ENCODE measurements at regions of chr16 and their contacts with region 1.

Region 1: DNA sequence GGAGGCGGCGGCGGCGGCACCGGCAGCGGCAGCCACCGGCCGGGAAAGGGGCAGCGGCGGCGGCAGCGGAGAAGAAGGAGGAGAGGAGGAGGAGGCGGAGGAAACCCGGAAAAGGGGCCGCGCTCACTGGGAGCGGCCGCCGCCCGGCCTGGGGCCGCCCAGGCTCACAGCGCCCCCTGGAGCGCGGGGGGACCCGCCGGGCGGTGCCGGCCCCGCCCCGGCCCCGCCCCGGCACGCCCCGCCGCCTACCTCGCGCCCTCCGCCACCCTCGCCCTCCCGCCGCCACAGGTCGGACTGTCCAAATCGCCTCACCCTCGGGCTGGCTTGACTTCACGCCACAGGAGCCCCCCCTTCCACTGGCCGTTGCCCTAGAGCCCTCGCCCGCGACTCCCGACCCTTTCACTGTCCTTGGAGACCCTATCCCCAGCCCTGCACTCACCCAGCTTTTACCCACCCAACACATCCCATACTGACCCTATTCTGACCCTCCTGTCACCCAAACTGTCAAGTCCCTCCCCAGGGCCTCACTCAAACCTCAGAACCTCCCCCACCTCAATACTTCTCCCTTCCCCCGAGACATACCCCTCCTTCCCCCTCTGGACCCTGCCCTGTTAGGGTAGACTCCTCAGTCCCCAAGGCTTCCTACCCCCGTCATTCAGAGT is at the start of gene CSNK2A2:
- DNase-seq: peak; percentile 56
- ATAC-seq: peak; percentile 99
- H3K4me3 ChIP-seq: peak within 1 kb of the TSS; percentile 82
- H3K27ac ChIP-seq: peak within 1 kb of the TSS; percentile 48
- H3K4me1 ChIP-seq: peaks cover 4% of the 10 kb centered on the region
- H3K27me3 ChIP-seq: peaks cover 15% of the 10 kb centered on the region
- CTCF ChIP-seq: peak; percentile 64
- POLR2A ChIP-seq: 0 out of 2 replicates have a peak, but pooled peaks have one; percentile 23
- RAD21 ChIP-seq: peak; percentile 11; the same call in 1 of the 2 replicates
- total RNA-seq, gene CSNK2A2: 15.6 and 16.9 TPM in 2 replicates

Region 2: GRCh38 chr16:58187092-58187491 is 11.1 kb before region 1 on chr16:
- CTCF ChIA-PET with region 1: no interaction called
- POLR2A ChIA-PET with region 1: no interaction called
- dilution Hi-C with region 1: no loop called
- in situ Hi-C with region 1: no loop called
- intact Hi-C with region 1: no loop called
- DNase-seq: no peak
- ATAC-seq: no peak
- H3K4me3 ChIP-seq: no peak overlapping the region
- H3K27ac ChIP-seq: no peak overlapping the region
- H3K4me1 ChIP-seq: no peaks in the 10 kb centered on the region
- H3K27me3 ChIP-seq: no peaks in the 10 kb centered on the region
- CTCF ChIP-seq: no peak
- POLR2A ChIP-seq: no peak
- RAD21 ChIP-seq: no peak

Region 3: GRCh38 chr16:58306327-58306726 is 108.2 kb after region 1 on chr16:
- CTCF ChIA-PET with region 1: no interaction called
- POLR2A ChIA-PET with region 1: no interaction called
- dilution Hi-C with region 1: no loop called
- in situ Hi-C with region 1: no loop called
- intact Hi-C with region 1: loop called (anchors 1 kb)
- DNase-seq: peak; percentile 24
- ATAC-seq: no peak
- H3K4me3 ChIP-seq: no peak overlapping the region
- H3K27ac ChIP-seq: no peak overlapping the region
- H3K4me1 ChIP-seq: no peaks in the 10 kb centered on the region
- H3K27me3 ChIP-seq: no peaks in the 10 kb centered on the region
- CTCF ChIP-seq: peak; percentile 37
- POLR2A ChIP-seq: no peak
- RAD21 ChIP-seq: peak; percentile 32

Region 4: DNA sequence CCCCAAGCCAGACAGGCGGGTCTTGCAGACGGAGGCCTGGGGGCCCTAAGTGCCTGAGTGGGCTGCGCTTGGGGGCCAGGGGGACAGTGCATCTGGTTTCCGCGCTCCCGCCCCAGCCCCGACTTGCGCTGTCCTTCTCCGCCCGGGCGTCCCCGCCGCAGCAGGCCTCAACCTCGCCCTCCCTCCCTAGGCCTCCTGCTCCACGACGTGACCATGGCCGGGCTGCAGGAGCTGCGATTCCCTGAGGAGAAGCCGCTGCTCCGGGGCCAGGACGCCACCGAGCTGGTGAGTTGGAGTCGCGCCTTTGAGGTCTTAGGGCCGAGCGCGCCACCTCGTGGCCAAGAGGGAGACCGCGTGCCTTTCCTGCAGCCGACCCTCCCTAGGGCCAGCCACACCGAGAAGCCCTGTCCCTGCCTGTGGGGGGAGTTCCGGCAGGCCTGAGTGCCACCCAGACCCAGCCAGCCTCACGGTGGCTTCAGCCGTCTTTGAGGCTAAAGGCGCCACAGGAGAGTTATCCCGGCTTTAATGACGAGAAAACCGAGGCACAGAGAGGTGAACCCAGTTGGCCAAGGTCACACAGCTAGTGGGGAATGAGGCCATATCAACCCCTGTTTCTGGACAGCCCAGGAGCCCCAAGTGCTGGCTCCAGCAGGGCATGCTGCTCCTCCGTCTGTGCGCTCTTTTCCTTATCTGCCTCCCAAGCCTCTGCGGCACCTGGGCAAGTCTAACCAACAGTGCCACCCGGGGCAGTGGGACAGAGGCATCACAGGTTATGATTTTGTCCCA is 289.6 kb after region 1 on chr16:
- CTCF ChIA-PET with region 1: no interaction called
- POLR2A ChIA-PET with region 1: no interaction called
- dilution Hi-C with region 1: no loop called
- in situ Hi-C with region 1: no loop called
- intact Hi-C with region 1: loop called (anchors 5 kb)
- DNase-seq: peak; percentile 67
- ATAC-seq: peak; percentile 99
- H3K4me3 ChIP-seq: no peak overlapping the region
- H3K27ac ChIP-seq: no peak overlapping the region
- H3K4me1 ChIP-seq: no peaks in the 10 kb centered on the region
- H3K27me3 ChIP-seq: peaks cover 10% of the 10 kb centered on the region
- CTCF ChIP-seq: peak; percentile 89
- POLR2A ChIP-seq: no peak
- RAD21 ChIP-seq: peak; percentile 89

Region 5: GRCh38 chr16:59632276-59632855 is 1434.2 kb after region 1 on chr16:
- CTCF ChIA-PET with region 1: no interaction called
- POLR2A ChIA-PET with region 1: no interaction called
- dilution Hi-C with region 1: no loop called
- in situ Hi-C with region 1: no loop called
- intact Hi-C with region 1: loop called (anchors 5 kb)
- DNase-seq: peak; percentile 68
- ATAC-seq: peak; percentile 33
- H3K4me3 ChIP-seq: no peak overlapping the region
- H3K27ac ChIP-seq: peak overlapping the region; percentile 49
- H3K4me1 ChIP-seq: peaks cover 17% of the 10 kb centered on the region
- H3K27me3 ChIP-seq: no peaks in the 10 kb centered on the region
- CTCF ChIP-seq: no peak
- POLR2A ChIP-seq: no peak
- RAD21 ChIP-seq: no peak